Activated CD4-positive, alpha-beta T cell treated with anti-CD3 and anti-CD28 coated beads for 36 hours (primary cell): ENCODE measurements at regions of chr19 and their contacts with region 1.

Region 1: GRCh38 chr19:58278157-58279041 is at the start of gene ZNF8:
- DNase-seq: peak; percentile 99
- ATAC-seq: peak; percentile 98
- H3K4me3 Mint-ChIP-seq: peak within 1 kb of the TSS; percentile 98
- H3K27ac Mint-ChIP-seq: peak within 1 kb of the TSS; percentile 95
- H3K4me1 Mint-ChIP-seq: peaks cover 28% of the 10 kb centered on the region
- H3K27me3 Mint-ChIP-seq: no peaks in the 10 kb centered on the region
- total RNA-seq, gene ZNF8: 4.4 to 4.5 TPM

Region 2: GRCh38 chr19:58228585-58229254 is 49.7 kb before region 1 on chr19 and contains the start of gene ZNF544:
- CTCF ChIA-PET with region 1: no interaction called
- POLR2A ChIA-PET with region 1: no interaction called
- intact Hi-C with region 1: loop called in 1 of 2 experiments (anchors 2 kb)
- DNase-seq: peak; percentile 85
- ATAC-seq: peak; percentile 87
- H3K4me3 Mint-ChIP-seq: peak within 1 kb of the TSS; percentile 91
- H3K27ac Mint-ChIP-seq: peak within 1 kb of the TSS; percentile 95
- H3K4me1 Mint-ChIP-seq: peaks cover 24% of the 10 kb centered on the region
- H3K27me3 Mint-ChIP-seq: no peaks in the 10 kb centered on the region
- total RNA-seq, gene ZNF544: 32.2 to 38.5 TPM

Region 3: DNA sequence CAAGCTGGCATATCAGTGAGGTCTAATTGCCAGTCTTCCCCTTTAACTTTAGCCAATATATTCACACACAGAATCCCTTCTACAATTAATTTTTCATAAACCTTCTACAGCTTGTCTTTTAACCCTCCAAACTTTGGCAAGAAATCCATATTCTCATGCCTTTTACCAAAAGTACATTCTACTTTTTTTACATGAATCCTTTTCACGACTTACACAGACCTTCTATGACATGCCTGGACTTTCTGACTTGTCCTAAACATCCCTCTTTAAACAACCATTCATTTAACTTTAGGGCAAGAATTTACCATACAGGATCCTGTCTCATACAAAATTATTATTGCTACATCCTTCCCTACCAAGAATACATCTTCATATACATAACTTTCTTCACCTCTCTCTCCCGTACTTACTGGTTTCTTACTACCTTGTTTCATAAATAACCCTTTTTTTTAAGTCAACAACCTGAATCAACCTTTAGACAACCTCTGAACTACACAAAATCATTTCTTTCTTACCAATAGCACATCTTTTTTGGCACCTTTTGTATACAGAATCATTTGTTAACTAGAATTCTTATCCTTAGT is 26.2 kb before region 1 on chr19:
- CTCF ChIA-PET with region 1: no interaction called
- POLR2A ChIA-PET with region 1: no interaction called
- intact Hi-C with region 1: no loop called
- DNase-seq: no peak
- ATAC-seq: no peak
- H3K4me3 Mint-ChIP-seq: no peak overlapping the region
- H3K27ac Mint-ChIP-seq: no peak overlapping the region
- H3K4me1 Mint-ChIP-seq: peaks cover 7% of the 10 kb centered on the region
- H3K27me3 Mint-ChIP-seq: no peaks in the 10 kb centered on the region

Region 4: DNA sequence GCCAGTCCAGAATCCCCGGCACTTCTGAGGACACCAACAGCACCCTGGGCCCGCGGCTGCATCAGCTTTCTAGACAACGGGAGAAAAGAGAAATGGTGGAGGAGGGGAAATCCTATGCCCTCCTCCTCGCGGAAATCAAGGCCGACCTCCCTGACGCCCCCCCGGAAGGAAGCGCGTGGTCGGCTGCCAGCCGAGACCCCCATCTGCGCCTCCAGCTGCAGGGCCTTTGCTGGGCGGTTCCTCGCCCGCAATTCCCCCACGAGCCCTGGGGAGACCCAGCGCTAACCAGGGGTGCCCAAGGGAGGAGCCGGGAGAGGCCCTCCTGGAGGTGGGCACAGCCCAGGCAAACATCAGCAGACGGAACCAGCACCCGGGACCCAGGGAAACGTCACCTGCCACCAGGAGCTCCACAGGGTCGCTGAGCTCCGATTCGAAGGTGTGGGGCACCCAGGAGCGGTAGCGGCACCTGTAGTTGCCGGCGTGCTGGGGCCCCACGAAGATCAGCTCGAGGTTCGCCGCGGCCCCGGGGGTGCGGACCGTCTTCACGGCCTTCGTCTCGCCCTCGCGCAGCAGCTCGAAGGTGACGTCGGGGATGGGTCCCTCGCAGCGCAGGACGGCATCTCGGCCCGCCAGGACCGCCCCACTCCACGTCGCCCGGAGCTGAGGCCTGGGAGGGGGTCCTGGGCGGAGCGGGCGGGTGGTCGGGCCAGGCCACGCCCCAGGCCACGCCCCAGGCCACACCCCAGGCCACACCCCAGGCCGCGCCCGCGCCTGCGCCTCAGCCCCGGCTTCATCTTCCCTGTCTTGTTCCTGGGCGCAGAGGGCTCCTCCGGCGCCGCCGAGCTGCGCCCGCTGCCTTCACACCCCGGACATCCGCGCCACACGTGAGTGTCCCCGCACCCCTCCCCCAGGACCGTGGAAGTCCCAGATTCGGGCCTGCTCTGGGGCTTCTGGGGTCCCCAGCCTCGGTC is 68.8 kb after region 1 on chr19:
- CTCF ChIA-PET with region 1: no interaction called
- POLR2A ChIA-PET with region 1: no interaction called
- intact Hi-C with region 1: loop called in 1 of 2 experiments (anchors 2 kb)
- DNase-seq: peak; percentile 87
- ATAC-seq: peak; percentile 97
- H3K4me3 Mint-ChIP-seq: peak overlapping the region; percentile 87
- H3K27ac Mint-ChIP-seq: peak overlapping the region; percentile 70
- H3K4me1 Mint-ChIP-seq: peaks cover 16% of the 10 kb centered on the region
- H3K27me3 Mint-ChIP-seq: peaks cover 10% of the 10 kb centered on the region

Region 5: DNA sequence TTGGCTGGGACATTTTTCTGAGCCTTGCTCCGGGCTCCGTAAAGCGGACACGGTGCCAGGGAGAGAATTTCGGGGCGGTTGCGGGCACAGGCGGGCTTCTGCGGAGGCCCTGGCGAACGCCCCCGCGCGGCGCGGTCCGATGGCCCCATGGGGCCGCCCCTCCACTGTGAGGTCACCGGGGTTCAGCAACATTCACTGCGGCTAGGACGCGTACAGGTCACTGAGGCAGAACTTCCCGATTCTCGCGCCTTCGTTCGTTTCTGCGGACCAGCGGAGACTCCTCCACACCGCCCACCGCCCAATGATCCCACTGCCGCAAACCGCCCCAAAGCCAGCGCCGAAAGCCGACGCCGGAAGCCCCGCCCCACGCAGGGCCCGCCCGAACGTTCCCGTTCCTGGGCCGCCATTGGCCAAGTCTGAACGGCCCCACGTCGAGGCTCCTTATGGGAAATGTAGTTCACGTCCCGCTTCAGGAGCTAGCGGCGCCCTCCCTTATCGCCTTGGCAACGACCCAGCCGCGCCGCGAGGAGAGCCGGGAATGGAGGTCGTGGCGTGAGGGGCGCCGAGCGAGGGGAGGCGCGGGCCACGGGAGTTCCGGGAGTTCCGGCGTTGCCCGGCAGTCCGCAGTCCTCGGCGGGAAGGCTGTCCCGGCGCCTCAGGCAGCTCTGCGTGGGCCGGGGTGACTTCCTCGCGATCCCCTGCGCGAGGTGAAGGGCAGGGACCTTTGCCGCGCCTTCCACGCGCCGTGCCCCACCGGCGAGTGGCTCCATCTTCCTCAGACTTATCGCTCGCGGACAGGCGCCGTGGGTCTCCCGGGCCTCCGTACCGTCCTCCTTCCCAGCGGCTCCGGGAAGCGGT is 130.0 kb after region 1 on chr19 and contains the start of gene ZNF584:
- CTCF ChIA-PET with region 1: no interaction called
- POLR2A ChIA-PET with region 1: no interaction called
- intact Hi-C with region 1: loop called (anchors 1 kb)
- DNase-seq: peak; percentile 97
- ATAC-seq: peak; percentile 97
- H3K4me3 Mint-ChIP-seq: peak within 1 kb of the TSS; percentile 84
- H3K27ac Mint-ChIP-seq: peak within 1 kb of the TSS; percentile 92
- H3K4me1 Mint-ChIP-seq: peaks cover 29% of the 10 kb centered on the region
- H3K27me3 Mint-ChIP-seq: no peaks in the 10 kb centered on the region
- total RNA-seq, gene ZNF584: 9.9 to 11.2 TPM

Region 6: DNA sequence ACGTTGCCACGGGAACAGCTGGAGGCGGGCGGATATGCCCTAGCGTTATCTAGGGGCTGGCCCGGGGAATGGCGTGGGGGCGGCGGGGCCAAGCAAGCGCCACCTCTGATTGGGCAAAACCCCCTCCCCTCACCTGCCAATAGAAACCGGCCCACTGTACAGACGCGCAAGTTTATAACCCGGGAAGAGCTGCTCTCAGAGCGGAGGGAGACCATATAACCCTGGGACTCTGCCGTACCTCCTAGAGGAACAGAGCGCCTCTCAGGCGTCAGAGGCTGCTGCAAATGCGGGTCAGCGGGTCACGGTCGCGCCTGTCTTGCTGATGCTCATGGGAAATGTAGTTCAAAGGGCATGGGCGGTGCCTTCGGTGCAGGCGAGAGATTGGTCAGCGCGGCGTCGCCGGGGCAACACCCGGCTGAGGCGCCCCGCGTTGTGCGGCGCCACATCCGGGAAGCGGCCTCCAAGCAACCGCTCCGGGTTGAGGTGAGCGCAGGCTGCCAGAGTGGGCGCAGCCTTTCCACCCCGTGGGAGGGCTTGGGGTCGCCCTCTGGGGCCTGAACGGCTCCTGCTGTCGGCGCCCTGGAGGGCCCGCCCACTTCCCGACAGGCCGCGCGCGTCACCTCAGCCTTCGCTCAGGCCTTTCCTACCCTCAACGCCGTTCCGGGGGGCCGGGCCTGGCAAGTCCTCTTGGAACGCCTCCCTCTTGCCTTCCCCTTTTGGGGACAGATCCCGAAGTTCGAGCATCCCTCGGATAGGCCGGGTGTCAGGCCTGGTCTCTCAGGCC is 197.5 kb after region 1 on chr19 and contains the start of gene ZNF446:
- CTCF ChIA-PET with region 1: no interaction called
- POLR2A ChIA-PET with region 1: no interaction called
- intact Hi-C with region 1: loop called in 1 of 2 experiments (anchors 1 kb)
- DNase-seq: peak; percentile 98
- ATAC-seq: peak; percentile 92
- H3K4me3 Mint-ChIP-seq: peak within 1 kb of the TSS; percentile 83
- H3K27ac Mint-ChIP-seq: peak within 1 kb of the TSS; percentile 96
- H3K4me1 Mint-ChIP-seq: peaks cover 14% of the 10 kb centered on the region
- H3K27me3 Mint-ChIP-seq: no peaks in the 10 kb centered on the region
- total RNA-seq, gene ZNF446: 4.2 to 4.7 TPM